CD4-positive, alpha-beta memory T cell (primary cell): ENCODE measurements at regions of chr7 and their contacts with region 1.

Region 1: DNA sequence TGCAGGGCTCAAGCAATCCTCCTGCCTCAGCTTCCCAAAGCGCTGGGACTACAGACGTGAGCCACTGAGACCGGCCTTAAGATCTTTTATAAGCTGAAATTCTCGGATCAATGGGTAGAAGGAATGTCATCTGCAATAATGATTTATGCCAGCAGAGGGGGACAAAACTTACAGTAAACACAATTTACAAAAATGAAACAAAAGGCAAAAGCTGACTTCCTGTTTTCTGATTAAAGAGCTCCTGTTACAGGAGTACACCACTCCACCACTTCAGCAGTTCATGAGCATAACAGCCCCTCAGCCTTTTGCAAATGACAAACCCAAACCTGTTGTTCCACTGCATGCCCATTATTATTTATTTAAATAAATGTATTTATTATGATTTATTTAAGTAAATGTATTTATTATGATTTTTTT is 88.5 kb upstream of the ATP6V0A4 start:
- DNase-seq: peak; percentile 53 to 78 (median 75)
- H3K4me3 ChIP-seq: no peak overlapping the region
- H3K4me3 Mint-ChIP-seq: peak overlapping the region in 4 of 8 donors; percentile 19 to 77 (median 54)
- H3K27ac ChIP-seq: no peak overlapping the region
- H3K27ac Mint-ChIP-seq: peak overlapping the region in 5 of 7 donors; percentile 65 to 92 (median 86)
- H3K4me1 ChIP-seq: no peaks in the 10 kb centered on the region
- H3K4me1 Mint-ChIP-seq: peaks cover 12 to 17% (median 15%) of the 10 kb centered on the region in 4 donors
- H3K27me3 ChIP-seq: no peaks in the 10 kb centered on the region
- H3K27me3 Mint-ChIP-seq: no peaks in the 10 kb centered on the region

Region 2: DNA sequence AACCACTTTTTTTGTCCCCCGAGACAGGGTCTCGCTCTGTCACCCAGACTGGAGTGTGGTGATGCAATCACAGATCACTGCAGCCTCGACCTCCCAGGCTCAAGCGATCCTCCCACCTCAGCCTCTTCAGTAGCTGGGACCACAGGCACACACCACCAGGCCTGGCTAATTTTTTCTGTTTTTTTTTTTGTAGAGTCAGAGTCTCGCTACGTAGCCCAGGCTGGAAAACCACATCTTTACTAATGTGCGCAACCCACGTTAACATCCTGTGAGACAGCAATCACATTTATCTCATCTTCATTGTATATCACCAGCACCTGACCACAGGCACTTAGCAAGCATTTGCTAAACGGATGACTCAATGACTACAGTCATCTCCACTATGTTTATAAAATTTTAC is 10.7 kb before region 1 on chr7:
- CTCF ChIA-PET with region 1: interaction called, 23 read pairs
- POLR2A ChIA-PET with region 1: interaction called, 5 read pairs
- intact Hi-C with region 1: loop called (anchors 1 kb)
- DNase-seq: peak; percentile 76 to 85 (median 80)
- H3K4me3 ChIP-seq: no peak overlapping the region
- H3K4me3 Mint-ChIP-seq: peak overlapping the region in 3 of 8 donors; percentile 6 to 67 (median 17)
- H3K27ac ChIP-seq: no peak overlapping the region
- H3K27ac Mint-ChIP-seq: peak overlapping the region; percentile 62 to 93 (median 82)
- H3K4me1 ChIP-seq: peaks cover 16% of the 10 kb centered on the region
- H3K4me1 Mint-ChIP-seq: peaks cover 10 to 19% (median 14%) of the 10 kb centered on the region in 4 donors
- H3K27me3 ChIP-seq: no peaks in the 10 kb centered on the region
- H3K27me3 Mint-ChIP-seq: peaks cover 0 to 2% of the 10 kb centered on the region in 2 donors

Region 3: DNA sequence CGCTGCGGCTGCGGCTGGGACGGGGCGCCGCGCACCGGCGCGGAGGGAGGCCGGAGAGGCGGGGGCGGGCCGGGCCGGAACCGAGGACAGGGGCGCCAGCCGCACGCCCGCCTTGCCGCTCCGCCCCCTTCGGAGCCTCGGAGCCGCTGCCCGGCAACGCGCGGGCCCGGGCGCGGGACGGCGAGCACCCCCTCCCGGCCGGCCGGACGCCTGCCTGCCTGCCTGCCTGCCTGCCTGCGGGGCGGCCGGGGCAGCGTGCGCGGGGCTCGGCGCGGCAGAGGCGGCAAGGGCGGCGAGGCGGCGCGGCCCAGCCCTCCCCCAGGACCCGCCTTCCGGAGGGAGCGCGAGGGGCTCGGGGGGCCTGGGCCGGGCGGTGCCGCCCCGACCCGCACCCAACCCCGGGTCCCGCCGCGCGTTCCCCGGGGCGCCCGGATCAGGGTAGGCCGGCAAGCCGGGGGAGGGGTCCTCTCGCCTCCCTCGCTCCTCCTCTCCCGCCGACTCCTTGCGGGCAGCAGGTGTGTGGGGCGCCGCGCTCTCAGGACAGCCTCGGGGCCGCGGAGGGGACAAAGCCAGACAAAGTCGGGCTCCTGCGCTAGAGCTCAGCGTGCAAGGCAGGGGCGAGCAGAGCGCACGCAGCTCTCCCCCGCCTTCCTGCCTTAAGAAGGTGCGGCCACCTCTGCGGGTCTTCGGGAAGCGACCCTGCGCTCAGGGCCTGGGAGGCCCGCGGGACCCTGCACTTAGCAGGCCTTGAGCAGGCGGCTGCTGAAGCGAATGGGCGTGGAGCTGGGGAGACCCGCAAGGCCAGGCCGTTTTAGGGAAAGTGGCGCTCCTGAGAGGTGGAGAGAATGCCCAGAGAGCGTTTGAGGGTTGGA is 95.1 kb after region 1 on chr7 and contains the start of gene KIAA1549:
- CTCF ChIA-PET with region 1: interaction called, 42 read pairs
- POLR2A ChIA-PET with region 1: interaction called, 17 read pairs
- intact Hi-C with region 1: loop called (anchors 1 kb)
- DNase-seq: peak in 4 of 5 donors; percentile 29 to 41 (median 36)
- H3K4me3 ChIP-seq: peak within 1 kb of the TSS in 1 of 2 donors; percentile 43
- H3K4me3 Mint-ChIP-seq: peak within 1 kb of the TSS; percentile 86 to 90 (median 89)
- H3K27ac ChIP-seq: no peak within 1 kb of the TSS
- H3K27ac Mint-ChIP-seq: peak within 1 kb of the TSS in 6 of 7 donors; percentile 30 to 86 (median 62)
- H3K4me1 ChIP-seq: peaks cover 6% of the 10 kb centered on the region
- H3K4me1 Mint-ChIP-seq: peaks cover 9 to 26% (median 12%) of the 10 kb centered on the region in 4 donors
- H3K27me3 ChIP-seq: peaks cover 22% of the 10 kb centered on the region
- H3K27me3 Mint-ChIP-seq: peaks cover 29 to 36% of the 10 kb centered on the region in 2 donors
- total RNA-seq, gene KIAA1549: 0.06 to 0.11 TPM

Region 4: DNA sequence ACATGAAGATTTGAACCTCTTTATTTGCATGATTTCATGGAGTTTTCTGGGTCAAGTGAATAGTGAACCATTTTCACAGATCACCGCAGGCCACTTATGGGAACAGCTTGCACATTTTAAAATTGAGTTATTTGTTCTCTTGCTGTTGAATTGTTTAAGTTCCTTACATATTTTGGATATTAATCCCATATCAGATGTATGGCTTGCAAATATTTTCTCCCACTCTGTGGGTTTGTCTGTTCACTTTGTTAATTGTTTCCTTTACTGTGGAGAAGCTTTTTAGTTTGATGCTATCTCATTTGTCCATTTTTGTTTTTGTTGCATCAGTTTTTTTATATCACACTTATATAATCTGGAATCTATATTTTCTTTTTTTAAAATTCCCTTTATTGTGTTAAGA is 163.4 kb after region 1 on chr7:
- CTCF ChIA-PET with region 1: interaction called, 8 read pairs
- POLR2A ChIA-PET with region 1: interaction called, 10 read pairs
- intact Hi-C with region 1: loop called (anchors 5 kb)
- DNase-seq: no peak
- H3K4me3 ChIP-seq: no peak overlapping the region
- H3K4me3 Mint-ChIP-seq: no peak overlapping the region
- H3K27ac ChIP-seq: no peak overlapping the region
- H3K27ac Mint-ChIP-seq: peak overlapping the region in 2 of 7 donors; percentile 22 to 61
- H3K4me1 ChIP-seq: peaks cover 26% of the 10 kb centered on the region
- H3K4me1 Mint-ChIP-seq: peaks cover 35 to 65% (median 48%) of the 10 kb centered on the region in 4 donors
- H3K27me3 ChIP-seq: no peaks in the 10 kb centered on the region
- H3K27me3 Mint-ChIP-seq: no peaks in the 10 kb centered on the region

Region 5: DNA sequence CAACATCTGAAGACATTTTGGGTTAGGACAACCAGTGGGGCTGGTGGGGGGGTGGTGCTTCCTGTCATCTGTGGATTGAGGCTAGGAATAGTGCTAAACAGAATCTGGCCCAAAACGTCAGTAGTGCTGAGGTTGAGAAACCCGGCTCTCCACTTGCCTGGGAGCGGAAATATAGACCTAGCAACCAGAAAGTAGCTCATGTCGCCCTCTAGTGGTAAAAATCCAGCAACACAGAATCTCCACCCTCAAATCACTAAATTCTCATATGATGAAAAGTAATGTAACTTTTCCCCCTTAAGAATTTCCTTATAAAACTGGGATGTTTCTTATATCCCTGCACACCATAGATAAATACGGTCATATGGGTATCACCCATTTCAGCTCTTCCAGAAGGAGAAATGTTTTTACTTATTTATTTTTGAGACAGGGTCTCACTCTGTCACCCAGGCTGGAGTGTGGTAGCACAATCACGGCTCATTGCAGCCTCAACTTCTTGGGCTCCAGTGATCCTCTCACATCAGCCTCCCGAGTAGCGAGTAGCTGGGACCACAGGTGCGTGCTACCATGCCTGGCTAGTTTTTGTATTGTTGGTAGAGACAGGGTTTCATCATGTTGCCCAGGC is 188.6 kb after region 1 on chr7:
- CTCF ChIA-PET with region 1: interaction called, 29 read pairs
- POLR2A ChIA-PET with region 1: interaction called, 6 read pairs
- intact Hi-C with region 1: loop called (anchors 1 kb)
- DNase-seq: peak; percentile 77 to 84 (median 80)
- H3K4me3 ChIP-seq: no peak overlapping the region
- H3K4me3 Mint-ChIP-seq: peak overlapping the region; percentile 53 to 75 (median 58)
- H3K27ac ChIP-seq: peak overlapping the region; percentile 27
- H3K27ac Mint-ChIP-seq: peak overlapping the region; percentile 86 to 91 (median 88)
- H3K4me1 ChIP-seq: peaks cover 61% of the 10 kb centered on the region
- H3K4me1 Mint-ChIP-seq: peaks cover 38 to 82% (median 59%) of the 10 kb centered on the region in 4 donors
- H3K27me3 ChIP-seq: no peaks in the 10 kb centered on the region
- H3K27me3 Mint-ChIP-seq: no peaks in the 10 kb centered on the region

Region 6: GRCh38 chr7:139340037-139340807 is 453.7 kb after region 1 on chr7:
- CTCF ChIA-PET with region 1: no interaction called
- POLR2A ChIA-PET with region 1: no interaction called
- intact Hi-C with region 1: loop called (anchors 1 kb)
- DNase-seq: peak; percentile 97 to 100 (median 98)
- H3K4me3 ChIP-seq: peak overlapping the region; percentile 95 to 96
- H3K4me3 Mint-ChIP-seq: peak overlapping the region; percentile 95 to 99 (median 98)
- H3K27ac ChIP-seq: peak overlapping the region; percentile 100
- H3K27ac Mint-ChIP-seq: peak overlapping the region; percentile 100
- H3K4me1 ChIP-seq: peaks cover 20% of the 10 kb centered on the region
- H3K4me1 Mint-ChIP-seq: peaks cover 17 to 45% (median 27%) of the 10 kb centered on the region in 4 donors
- H3K27me3 ChIP-seq: no peaks in the 10 kb centered on the region
- H3K27me3 Mint-ChIP-seq: peaks cover 3 to 6% of the 10 kb centered on the region in 2 donors